ENCODE measurements at regions of chr9 and their contacts with region 1.

Region 1: DNA sequence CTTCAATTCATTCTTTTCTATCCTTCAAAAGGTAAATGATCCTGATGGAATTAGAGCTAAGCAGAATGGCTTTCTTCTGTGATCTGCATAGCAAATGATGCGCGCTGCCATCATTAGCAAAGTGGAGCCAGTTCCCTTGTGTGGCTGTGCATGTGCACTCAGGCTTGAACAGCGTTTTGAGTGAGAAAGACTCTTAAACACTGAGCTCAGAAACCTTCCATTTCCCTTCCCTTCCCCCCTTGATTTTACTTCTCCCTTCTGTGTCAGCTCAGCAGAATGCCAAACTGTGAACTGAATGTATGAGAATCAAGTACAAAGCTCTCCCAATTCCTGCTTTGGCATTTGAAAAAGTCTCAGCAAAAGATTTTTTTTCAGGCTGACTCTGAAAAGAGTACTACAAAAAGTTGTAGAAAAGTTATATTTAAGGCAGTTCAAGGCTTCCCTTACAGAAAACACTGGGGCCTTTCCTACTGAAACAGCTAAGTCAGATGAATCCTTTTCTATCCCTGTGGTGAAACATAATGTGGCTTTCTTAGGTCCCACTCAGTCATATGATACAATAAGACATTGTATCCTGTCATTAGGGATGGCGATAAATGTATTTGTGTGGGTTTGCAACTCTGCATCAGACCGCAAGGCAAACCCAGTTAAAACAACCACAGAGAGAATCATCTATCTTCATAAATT is 222.8 kb downstream of the CAAP1 start:
- DNase-seq: no peak
- ATAC-seq: no peak
- H3K4me3 ChIP-seq: no peak overlapping the region
- H3K27ac ChIP-seq: no peak overlapping the region
- H3K4me1 ChIP-seq: no peaks in the 10 kb centered on the region
- H3K27me3 ChIP-seq: no peaks in the 10 kb centered on the region
- CTCF ChIP-seq: no peak

Region 2: DNA sequence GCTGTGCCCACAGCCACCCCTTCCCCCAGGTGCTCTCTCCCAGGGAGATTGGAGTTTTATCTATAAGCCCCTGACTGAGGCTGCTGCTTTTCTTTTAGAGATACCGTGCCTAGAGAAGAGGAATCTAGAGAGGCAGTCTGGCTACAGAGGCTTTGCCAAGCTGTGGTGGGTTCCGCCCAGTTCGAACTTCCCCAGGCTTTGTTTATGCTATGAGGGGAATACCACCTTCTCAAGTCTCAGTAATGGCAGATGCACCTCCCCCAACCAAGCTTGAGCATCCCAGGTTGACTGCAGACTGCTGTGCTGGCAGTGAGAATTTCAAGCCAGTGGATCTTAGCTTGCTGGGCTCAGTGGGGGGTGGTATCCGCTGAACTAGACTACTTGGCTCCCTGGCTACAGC is 65.4 kb after region 1 on chr9:
- intact Hi-C with region 1: loop called in 1 of 2 experiments (anchors 10 kb)
- DNase-seq: no peak
- ATAC-seq: no peak
- H3K4me3 ChIP-seq: no peak overlapping the region
- H3K27ac ChIP-seq: no peak overlapping the region
- H3K4me1 ChIP-seq: no peaks in the 10 kb centered on the region
- H3K27me3 ChIP-seq: no peaks in the 10 kb centered on the region
- CTCF ChIP-seq: no peak

Region 3: DNA sequence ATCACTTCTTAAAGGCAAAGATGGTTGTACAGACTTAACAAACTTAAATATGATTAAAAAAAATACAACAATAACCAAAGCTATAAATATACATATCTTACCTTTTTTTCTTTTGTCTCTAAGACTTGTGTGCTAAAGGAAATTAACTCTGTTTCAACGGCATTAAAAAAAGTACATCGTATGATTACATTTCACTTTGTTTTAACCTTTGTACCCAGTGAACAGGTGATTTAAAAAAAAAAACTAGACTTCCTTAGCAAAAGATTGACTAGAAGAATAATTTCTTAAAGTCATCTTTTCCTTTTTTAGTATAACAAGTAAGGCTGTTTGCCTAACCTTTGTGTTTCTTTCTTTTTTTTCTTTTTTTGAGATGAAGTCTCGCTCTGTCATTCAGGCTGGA is 335.7 kb after region 1 on chr9 and contains the start of gene LRRC19:
- intact Hi-C with region 1: no loop called
- DNase-seq: no peak
- ATAC-seq: no peak
- H3K4me3 ChIP-seq: no peak within 1 kb of the TSS
- H3K27ac ChIP-seq: no peak within 1 kb of the TSS
- H3K4me1 ChIP-seq: no peaks in the 10 kb centered on the region
- H3K27me3 ChIP-seq: no peaks in the 10 kb centered on the region
- CTCF ChIP-seq: no peak
- total RNA-seq, gene LRRC19: not detected

Measured in psoas muscle (tissue), 8 donors.